HEK293 (cell line): ENCODE measurements at regions of chr20 and their contacts with region 1.

Region 1: DNA sequence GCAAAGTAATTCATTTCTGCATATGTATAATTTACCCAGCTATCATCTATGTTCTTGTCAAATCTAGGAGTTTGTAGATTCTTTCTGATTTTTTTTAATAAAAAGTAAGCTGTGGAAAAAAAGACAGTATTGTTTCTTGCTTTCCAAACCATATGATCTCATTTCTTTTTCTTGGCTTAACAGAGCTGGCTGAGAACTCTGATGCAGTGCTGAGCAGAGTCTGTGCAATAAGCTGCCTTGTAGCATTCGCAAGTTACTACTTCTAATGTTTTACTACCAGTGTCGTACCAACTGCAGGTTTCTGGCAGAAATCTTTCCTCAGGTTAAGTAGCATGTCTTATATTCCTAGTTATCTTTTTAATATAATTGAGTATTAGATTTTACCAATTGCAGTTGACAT is 15.6 kb downstream of the RRBP1 start:
- H3K4me3 ChIP-seq: no peak overlapping the region
- H3K27ac ChIP-seq: no peak overlapping the region
- H3K4me1 ChIP-seq: no peaks in the 10 kb centered on the region
- CTCF ChIP-seq: no peak

Region 2: DNA sequence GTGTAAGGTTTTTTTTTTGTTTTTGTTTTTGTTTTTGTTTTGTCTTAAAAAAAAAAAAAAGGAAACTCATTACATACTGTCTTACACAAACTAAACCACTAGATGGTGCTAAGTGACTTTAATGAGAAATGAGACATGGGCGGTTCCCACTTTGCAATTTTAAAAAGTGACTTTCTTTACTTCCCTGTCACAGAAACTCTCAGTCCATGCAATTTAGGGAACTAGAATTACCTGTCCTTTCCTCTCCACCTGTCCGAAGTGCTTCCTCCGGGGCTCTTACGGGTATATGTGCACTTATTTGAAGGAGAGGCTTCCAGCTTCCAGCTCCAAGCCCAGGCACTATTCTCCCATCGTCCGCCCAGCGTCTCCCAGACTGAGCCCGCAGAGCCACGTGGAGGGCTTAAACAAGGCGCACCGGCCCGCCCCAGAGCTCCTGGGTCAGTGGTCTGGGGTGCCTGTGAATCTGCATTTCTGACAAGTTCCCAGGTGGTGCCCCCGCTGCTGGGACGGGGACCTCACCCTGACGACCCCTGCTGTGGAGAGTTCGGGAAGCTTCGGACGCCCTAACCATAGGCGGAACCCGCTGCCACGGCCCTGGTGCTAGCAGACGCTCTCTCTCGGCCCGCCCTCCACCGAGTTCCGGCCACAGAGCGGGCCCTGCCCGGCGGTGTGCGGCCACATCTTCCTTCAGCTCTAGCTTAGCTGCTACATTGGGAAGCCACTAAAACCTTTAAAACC is 161.4 kb before region 1 on chr20:
- CTCF ChIA-PET with region 1: no interaction called
- POLR2A ChIA-PET with region 1: no interaction called
- H3K4me3 ChIP-seq: no peak overlapping the region
- H3K27ac ChIP-seq: no peak overlapping the region
- H3K4me1 ChIP-seq: no peaks in the 10 kb centered on the region
- CTCF ChIP-seq: no peak

Region 3: GRCh38 chr20:17654649-17655285 is 11.7 kb before region 1 on chr20:
- CTCF ChIA-PET with region 1: interaction called, 19 read pairs
- POLR2A ChIA-PET with region 1: no interaction called
- H3K4me3 ChIP-seq: no peak overlapping the region
- H3K27ac ChIP-seq: no peak overlapping the region
- H3K4me1 ChIP-seq: peaks cover 3% of the 10 kb centered on the region; the same call in 1 of the 2 replicates
- CTCF ChIP-seq: no peak

Region 4: DNA sequence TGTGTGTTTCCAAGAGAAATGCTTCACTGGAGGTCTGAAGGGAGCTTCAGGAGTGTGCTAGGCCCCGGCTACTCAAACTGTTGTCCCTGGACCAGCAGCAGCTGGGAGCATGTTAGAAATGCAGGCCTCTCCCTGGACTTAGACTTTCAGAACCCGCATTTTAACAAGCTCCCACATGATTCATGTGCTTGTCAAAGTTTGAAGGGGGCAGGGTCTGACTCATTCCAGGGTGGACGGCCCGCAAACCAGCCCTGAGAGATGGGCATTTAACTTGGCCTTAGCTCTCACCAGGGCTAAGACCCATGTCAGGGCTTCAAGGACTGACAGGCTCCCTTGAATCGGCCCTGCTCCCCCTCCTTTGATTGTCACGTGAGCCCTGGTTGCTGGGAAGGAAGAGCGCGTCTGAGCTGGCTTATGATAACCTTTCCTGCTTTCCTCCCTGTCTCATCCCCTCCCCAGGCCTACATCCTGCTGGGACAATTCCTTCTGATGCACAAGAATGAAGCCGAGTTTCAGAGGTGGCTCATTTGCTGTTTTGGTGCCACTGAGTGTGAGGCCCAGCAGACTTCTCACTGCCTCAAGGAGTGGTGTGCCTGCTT is 68.8 kb after region 1 on chr20:
- CTCF ChIA-PET with region 1: no interaction called
- POLR2A ChIA-PET with region 1: no interaction called
- H3K4me3 ChIP-seq: no peak overlapping the region
- H3K27ac ChIP-seq: no peak overlapping the region
- H3K4me1 ChIP-seq: no peaks in the 10 kb centered on the region
- CTCF ChIP-seq: no peak